Colonic mucosa (tissue), 4 donors: ENCODE measurements at regions of chr10 and their contacts with region 1.

Region 1: GRCh38 chr10:113735921-113736320 is 15.6 kb upstream of the PLEKHS1 start:
- DNase-seq: no peak
- H3K4me3 ChIP-seq: no peak overlapping the region
- H3K27ac ChIP-seq: no peak overlapping the region
- H3K4me1 ChIP-seq: no peaks in the 10 kb centered on the region
- H3K27me3 ChIP-seq: no peaks in the 10 kb centered on the region
- CTCF ChIP-seq: no peak

Region 2: DNA sequence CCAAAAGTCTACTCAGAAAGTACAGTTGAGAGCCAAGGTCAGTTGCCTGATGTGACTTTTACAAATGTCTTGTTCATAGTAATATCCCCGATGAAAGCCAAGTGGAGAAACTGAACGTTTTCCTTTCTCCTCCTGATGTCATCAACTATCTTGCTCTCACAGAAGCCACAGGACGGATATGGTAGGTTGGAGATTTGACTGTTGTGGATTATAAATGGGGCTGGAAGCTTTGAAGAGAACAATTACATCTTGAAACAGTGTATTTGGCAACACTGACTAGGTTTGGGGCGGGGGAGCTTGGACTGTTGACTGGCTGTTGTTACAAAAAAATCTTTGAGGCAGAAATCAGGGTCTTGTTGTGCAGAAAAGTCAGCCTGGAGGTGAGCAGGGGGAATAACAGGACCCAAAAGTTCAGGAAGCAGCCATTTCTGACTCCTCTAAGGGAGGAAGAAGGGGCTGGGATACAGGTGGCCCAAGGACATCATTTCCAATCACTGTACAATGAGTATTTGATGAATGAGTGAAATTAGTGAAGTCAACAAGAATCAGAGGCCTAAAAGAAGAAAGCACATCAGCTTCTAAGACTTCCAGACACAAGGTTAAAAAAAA is 39.9 kb after region 1 on chr10:
- intact Hi-C with region 1: loop called (anchors 5 kb)
- DNase-seq: no peak
- H3K4me3 ChIP-seq: no peak overlapping the region
- H3K27ac ChIP-seq: no peak overlapping the region
- H3K4me1 ChIP-seq: no peaks in the 10 kb centered on the region
- H3K27me3 ChIP-seq: no peaks in the 10 kb centered on the region
- CTCF ChIP-seq: no peak